MCF 10A (cell line): ENCODE measurements at regions of chr10 and their contacts with region 1.

Region 1: DNA sequence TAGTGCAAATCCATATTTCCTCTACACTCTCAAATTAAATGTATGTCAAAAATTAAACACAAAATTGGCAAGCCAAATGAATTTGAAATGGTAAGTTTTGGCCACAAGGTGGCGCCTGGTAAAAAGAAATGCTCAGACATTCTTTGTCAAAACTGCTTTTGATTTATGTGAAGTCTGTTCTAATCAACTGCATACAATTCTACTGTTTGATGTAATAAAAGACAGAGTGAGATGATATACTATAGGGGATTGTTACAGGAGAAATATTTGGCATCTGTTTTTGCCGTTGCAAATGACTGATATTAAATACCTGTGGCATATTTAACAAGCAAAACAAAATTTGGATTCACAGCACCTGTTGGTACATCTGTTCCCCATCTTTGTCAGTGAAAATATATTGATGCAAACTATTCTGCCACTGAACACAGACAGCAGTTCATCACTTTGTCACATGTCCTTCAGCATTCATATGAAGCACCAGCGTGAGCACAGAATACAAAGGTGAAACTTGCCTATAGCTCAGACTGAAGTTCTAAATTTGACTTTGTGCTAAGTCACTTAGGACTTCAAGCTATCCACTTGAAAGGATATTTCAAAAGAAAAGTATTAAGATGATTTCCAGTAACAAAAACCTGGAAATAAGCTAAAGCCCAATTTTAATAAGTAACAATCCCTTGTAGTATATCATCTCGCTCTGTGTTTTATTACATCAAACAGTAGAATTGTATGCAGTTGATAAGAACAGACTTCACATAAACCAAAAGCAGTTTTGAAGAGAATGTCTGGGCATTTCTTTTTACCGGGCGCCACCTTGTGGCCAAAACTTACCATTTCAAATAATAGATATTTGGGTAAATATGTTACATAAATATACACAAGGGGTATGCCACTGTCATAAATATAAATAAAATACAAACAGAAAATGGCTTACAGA is 10.2 kb upstream of the CH25H start:
- DNase-seq: peak; percentile 73
- H3K4me3 Mint-ChIP-seq: no peak overlapping the region
- H3K27ac Mint-ChIP-seq: no peak overlapping the region
- H3K4me1 Mint-ChIP-seq: peaks cover 7% of the 10 kb centered on the region
- H3K27me3 Mint-ChIP-seq: no peaks in the 10 kb centered on the region
- CTCF ChIP-seq: peak; percentile 55

Region 2: DNA sequence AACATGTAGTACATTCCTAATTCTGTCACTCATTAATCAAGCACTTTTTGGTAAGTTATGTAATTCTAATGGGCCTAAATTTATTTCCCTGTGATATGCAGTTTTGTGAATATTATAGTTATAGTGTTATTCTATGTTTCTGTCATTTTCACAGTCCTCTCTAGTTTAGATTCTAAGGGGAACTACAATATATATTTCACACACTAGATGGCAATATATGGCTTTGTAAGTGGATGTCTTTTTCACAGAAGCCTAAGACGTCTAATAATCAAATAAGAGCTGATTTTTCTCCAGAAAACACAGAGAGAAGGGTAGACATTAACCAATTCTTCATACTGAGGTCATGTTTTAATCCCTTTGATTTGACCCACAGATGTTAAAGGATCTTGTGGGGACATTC is 652.3 kb before region 1 on chr10:
- CTCF ChIA-PET with region 1: no interaction called
- POLR2A ChIA-PET with region 1: no interaction called
- intact Hi-C with region 1: loop called (anchors 1 kb)
- DNase-seq: peak; percentile 35
- H3K4me3 Mint-ChIP-seq: no peak overlapping the region
- H3K27ac Mint-ChIP-seq: no peak overlapping the region
- H3K4me1 Mint-ChIP-seq: no peaks in the 10 kb centered on the region
- H3K27me3 Mint-ChIP-seq: peaks cover 17% of the 10 kb centered on the region
- CTCF ChIP-seq: peak; percentile 48

Region 3: GRCh38 chr10:89029785-89030437 is 187.4 kb before region 1 on chr10:
- CTCF ChIA-PET with region 1: interaction called, 121 read pairs
- POLR2A ChIA-PET with region 1: interaction called, 19 read pairs
- intact Hi-C with region 1: loop called (anchors 1 kb)
- DNase-seq: peak; percentile 81
- H3K4me3 Mint-ChIP-seq: no peak overlapping the region
- H3K27ac Mint-ChIP-seq: no peak overlapping the region
- H3K4me1 Mint-ChIP-seq: peaks cover 30% of the 10 kb centered on the region
- H3K27me3 Mint-ChIP-seq: no peaks in the 10 kb centered on the region
- CTCF ChIP-seq: peak; percentile 79

Region 4: DNA sequence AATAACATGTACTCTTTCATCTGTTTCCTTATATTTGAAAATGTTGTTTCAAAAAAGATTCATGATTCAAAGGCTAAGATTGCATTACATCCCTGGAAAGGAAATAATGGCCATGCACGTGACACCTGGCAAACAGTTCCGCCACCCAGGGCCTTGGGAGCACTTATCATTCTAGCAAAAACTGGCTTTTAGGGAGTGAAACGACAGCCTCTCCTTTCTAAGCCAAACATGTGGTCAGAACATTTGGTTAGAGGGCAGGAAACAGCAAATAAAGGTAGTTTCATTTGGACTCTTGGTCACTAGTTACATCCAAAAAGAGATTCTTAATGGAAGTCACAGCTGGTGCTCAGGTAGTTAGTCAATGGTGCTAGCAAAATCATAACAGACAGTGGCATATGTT is 143.2 kb before region 1 on chr10:
- CTCF ChIA-PET with region 1: no interaction called
- POLR2A ChIA-PET with region 1: no interaction called
- intact Hi-C with region 1: no loop called
- DNase-seq: no peak
- H3K4me3 Mint-ChIP-seq: no peak overlapping the region
- H3K27ac Mint-ChIP-seq: peak overlapping the region; percentile 61
- H3K4me1 Mint-ChIP-seq: peaks cover 12% of the 10 kb centered on the region
- H3K27me3 Mint-ChIP-seq: no peaks in the 10 kb centered on the region
- CTCF ChIP-seq: no peak

Region 5: GRCh38 chr10:89158446-89158845 is 58.9 kb before region 1 on chr10:
- CTCF ChIA-PET with region 1: no interaction called
- POLR2A ChIA-PET with region 1: no interaction called
- intact Hi-C with region 1: no loop called
- DNase-seq: no peak
- H3K4me3 Mint-ChIP-seq: no peak overlapping the region
- H3K27ac Mint-ChIP-seq: peak overlapping the region; percentile 25
- H3K4me1 Mint-ChIP-seq: peaks cover 9% of the 10 kb centered on the region
- H3K27me3 Mint-ChIP-seq: no peaks in the 10 kb centered on the region
- CTCF ChIP-seq: no peak

Region 6: GRCh38 chr10:89241486-89242344 is 24.4 kb after region 1 on chr10:
- CTCF ChIA-PET with region 1: interaction called, 11 read pairs
- POLR2A ChIA-PET with region 1: interaction called, 3 read pairs
- intact Hi-C with region 1: no loop called
- DNase-seq: peak; percentile 77
- H3K4me3 Mint-ChIP-seq: peak overlapping the region; percentile 18
- H3K27ac Mint-ChIP-seq: peak overlapping the region; percentile 74
- H3K4me1 Mint-ChIP-seq: peaks cover 18% of the 10 kb centered on the region
- H3K27me3 Mint-ChIP-seq: no peaks in the 10 kb centered on the region
- CTCF ChIP-seq: no peak

Region 7: GRCh38 chr10:89391917-89392756 is 174.8 kb after region 1 on chr10 and contains the start of gene IFIT1:
- CTCF ChIA-PET with region 1: no interaction called
- POLR2A ChIA-PET with region 1: no interaction called
- intact Hi-C with region 1: loop called (anchors 1 kb)
- DNase-seq: peak; percentile 85
- H3K4me3 Mint-ChIP-seq: peak within 1 kb of the TSS; percentile 77
- H3K27ac Mint-ChIP-seq: peak within 1 kb of the TSS; percentile 68
- H3K4me1 Mint-ChIP-seq: no peaks in the 10 kb centered on the region
- H3K27me3 Mint-ChIP-seq: no peaks in the 10 kb centered on the region
- CTCF ChIP-seq: no peak
- total RNA-seq, gene IFIT1: 0.17 and 0.26 TPM in 2 replicates